Activated T-helper 2 cell treated with anti-CD3 and anti-CD28 coated beads, Interferon-gamma antibody, Interleukin-2, Interleukin-4, amounts not matched to agents 10 μg/mL and 5 μg/mL and 100 μg/mL, durations not matched to agents 14 hours and 24 hours and 36 hours (primary cell): ENCODE measurements at regions of chr2 and their contacts with region 1.

Region 1: DNA sequence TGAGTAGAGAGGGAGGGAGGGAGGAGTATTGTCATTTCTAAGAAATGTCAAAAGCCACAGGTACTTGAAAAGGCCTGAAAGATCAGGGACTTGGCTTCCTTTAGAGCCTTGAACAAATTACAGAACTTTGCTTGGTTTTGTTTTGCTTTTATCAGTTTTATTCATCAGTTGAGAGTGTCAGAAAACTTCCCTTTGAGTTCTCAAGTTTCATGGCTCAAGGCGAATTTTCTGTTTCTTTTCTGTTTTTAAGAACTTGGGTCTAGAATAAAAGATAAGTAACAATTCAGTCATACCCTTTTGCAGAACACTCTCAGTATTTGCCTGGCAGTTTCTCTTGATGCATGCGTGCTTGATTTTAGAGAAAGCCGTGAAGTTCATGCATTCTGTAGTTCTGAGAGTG is 531.9 kb downstream of the PARD3B start:
- DNase-seq: peak; percentile 20
- H3K4me3 Mint-ChIP-seq: peak overlapping the region; percentile 39
- H3K27ac Mint-ChIP-seq: peak overlapping the region; percentile 60
- H3K4me1 Mint-ChIP-seq: peaks cover 43% of the 10 kb centered on the region
- H3K27me3 Mint-ChIP-seq: no peaks in the 10 kb centered on the region

Region 2: GRCh38 chr2:204892506-204893255 is 184.5 kb before region 1 on chr2:
- intact Hi-C with region 1: loop called (anchors 5 kb)
- DNase-seq: peak; percentile 17
- H3K4me3 Mint-ChIP-seq: no peak overlapping the region
- H3K27ac Mint-ChIP-seq: no peak overlapping the region
- H3K4me1 Mint-ChIP-seq: peaks cover 14% of the 10 kb centered on the region
- H3K27me3 Mint-ChIP-seq: no peaks in the 10 kb centered on the region

Region 3: DNA sequence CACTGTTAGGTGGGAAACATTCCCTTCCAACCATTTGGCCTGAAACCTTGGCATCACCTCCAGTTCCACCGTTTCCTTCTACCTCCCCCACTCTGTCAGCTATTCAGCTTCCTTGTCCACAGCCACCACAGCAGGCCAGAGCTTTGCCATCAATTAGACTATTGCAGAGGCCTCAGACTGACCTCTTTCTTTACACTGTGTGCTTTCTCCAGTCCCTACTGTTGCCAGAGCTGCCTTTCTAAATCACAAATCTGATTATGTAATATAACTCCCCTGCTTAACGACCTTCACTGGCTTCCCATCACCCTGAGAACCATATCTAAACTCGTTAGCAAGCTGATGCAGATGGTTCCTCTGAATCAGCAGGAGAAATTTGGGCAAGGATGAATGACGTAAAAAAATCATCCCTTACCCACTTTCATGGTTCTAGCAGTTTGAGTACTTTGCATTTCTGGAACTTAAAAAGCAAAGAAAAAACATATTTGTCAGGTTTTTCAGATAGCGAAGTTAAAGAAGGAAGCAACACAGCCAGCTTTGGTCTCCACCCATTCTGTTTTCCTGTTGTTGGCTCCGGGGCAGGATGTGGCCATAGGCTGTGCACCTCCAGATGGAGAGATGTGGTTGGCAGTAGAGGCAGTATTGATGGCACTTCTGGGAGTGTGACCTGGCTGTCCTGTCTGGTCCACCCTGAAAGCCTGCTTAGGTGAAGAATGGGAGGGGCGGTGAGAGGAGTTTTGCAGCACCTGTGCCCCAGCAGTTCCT is 109.8 kb before region 1 on chr2:
- intact Hi-C with region 1: loop called (anchors 2 kb)
- DNase-seq: peak; percentile 72
- H3K4me3 Mint-ChIP-seq: peak overlapping the region; percentile 6
- H3K27ac Mint-ChIP-seq: peak overlapping the region; percentile 81
- H3K4me1 Mint-ChIP-seq: peaks cover 52% of the 10 kb centered on the region
- H3K27me3 Mint-ChIP-seq: no peaks in the 10 kb centered on the region

Region 4: DNA sequence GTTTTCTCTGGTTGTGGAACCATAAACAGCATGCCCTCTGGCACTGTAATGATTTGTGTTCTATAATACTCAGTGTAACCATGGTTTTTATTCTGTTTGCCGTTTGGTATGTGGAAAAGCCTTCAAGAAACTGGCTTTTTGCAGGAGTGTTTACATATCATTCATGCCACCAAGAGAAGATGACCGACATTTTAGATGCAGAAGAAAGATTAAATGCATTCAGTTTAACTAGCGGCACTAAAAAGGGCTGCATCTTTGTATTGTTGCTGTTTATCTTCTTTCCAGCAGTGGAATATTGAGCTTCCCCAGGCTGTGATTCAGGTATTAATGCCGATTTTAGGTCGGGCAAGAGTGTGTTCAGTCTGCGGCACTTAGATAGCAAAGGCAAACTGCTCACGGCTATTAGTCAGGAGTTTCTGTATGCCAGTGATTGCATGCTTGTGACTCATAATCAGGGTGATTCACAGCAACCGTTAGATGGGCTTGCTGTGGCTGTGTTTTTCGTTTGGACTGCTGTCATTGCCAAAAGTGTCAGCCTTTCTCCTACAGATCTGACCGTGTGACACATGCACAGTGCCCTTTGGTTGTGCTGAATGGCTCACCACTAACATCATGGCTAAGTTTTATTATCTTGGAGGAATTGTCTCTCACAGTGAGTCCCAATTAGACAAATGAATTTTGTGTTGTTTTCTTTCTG is 52.2 kb before region 1 on chr2:
- intact Hi-C with region 1: loop called (anchors 5 kb)
- DNase-seq: peak; percentile 35
- H3K4me3 Mint-ChIP-seq: peak overlapping the region; percentile 22
- H3K27ac Mint-ChIP-seq: peak overlapping the region; percentile 43
- H3K4me1 Mint-ChIP-seq: peaks cover 32% of the 10 kb centered on the region
- H3K27me3 Mint-ChIP-seq: no peaks in the 10 kb centered on the region

Region 5: DNA sequence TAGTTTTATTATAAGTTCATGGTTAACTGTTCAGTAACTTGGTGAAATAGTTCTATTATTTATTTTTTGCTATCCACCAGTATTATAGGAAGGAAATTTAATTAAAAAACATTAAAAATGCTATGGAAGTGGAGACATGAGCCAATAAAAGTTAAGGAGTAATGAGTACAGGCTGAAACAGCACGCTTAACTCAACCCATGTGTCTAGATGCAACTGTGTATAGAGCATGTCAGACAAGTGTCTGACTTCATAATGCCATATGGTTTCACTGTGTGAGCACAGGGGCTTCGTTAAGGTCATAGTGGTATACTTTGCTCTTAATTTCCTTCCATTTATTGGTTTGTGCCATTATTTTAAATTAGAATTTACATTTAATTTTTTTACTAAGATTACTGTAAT is 38.4 kb after region 1 on chr2:
- intact Hi-C with region 1: loop called (anchors 2 kb)
- DNase-seq: no peak
- H3K4me3 Mint-ChIP-seq: no peak overlapping the region
- H3K27ac Mint-ChIP-seq: no peak overlapping the region
- H3K4me1 Mint-ChIP-seq: peaks cover 18% of the 10 kb centered on the region
- H3K27me3 Mint-ChIP-seq: peaks cover 2% of the 10 kb centered on the region

Region 6: GRCh38 chr2:205903638-205904037 is 826.5 kb after region 1 on chr2:
- intact Hi-C with region 1: no loop called
- DNase-seq: no peak
- H3K4me3 Mint-ChIP-seq: no peak overlapping the region
- H3K27ac Mint-ChIP-seq: no peak overlapping the region
- H3K4me1 Mint-ChIP-seq: no peaks in the 10 kb centered on the region
- H3K27me3 Mint-ChIP-seq: peaks cover 4% of the 10 kb centered on the region